ENCODE measurements at regions of chr4 and their contacts with region 1.

Region 1: GRCh38 chr4:38034986-38035882 is 75.0 kb downstream of the PTTG2 start:
- DNase-seq: no peak
- H3K4me3 ChIP-seq: no peak overlapping the region
- H3K27ac ChIP-seq: no peak overlapping the region
- H3K4me1 ChIP-seq: peaks cover 12% of the 10 kb centered on the region
- H3K27me3 ChIP-seq: no peaks in the 10 kb centered on the region
- CTCF ChIP-seq: peak; percentile 78

Region 2: DNA sequence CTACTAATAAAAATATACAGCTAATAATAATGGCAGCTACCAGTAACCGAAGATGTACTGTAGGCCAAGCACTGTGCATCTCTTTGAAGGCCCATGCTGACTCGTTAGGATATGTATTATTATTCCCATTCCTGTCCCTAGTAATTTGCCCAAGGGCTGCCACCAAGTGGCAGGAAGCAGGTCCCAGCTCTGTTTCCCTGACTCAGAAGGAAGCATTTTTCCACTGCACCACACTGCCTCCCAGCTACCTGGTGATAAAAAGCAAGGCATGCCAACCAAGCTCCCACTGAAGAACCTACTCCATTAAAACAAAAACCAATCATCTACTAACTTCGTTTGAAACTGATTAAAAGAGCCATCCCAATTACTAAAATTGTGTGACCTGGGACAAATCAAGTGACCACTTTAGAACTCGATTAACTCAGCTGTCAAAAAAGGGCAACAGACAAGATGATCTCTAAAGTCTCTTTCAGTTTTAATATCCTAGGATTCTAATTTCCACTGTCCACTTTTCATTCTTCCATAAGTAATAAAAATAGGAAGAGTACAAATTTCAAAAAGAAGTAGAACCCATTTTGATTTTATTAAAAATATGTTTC is 233.1 kb before region 1 on chr4:
- intact Hi-C with region 1: loop called (anchors 5 kb)
- DNase-seq: peak; percentile 26
- H3K4me3 ChIP-seq: no peak overlapping the region
- H3K27ac ChIP-seq: no peak overlapping the region
- H3K4me1 ChIP-seq: no peaks in the 10 kb centered on the region
- H3K27me3 ChIP-seq: no peaks in the 10 kb centered on the region
- CTCF ChIP-seq: peak; percentile 71

Region 3: DNA sequence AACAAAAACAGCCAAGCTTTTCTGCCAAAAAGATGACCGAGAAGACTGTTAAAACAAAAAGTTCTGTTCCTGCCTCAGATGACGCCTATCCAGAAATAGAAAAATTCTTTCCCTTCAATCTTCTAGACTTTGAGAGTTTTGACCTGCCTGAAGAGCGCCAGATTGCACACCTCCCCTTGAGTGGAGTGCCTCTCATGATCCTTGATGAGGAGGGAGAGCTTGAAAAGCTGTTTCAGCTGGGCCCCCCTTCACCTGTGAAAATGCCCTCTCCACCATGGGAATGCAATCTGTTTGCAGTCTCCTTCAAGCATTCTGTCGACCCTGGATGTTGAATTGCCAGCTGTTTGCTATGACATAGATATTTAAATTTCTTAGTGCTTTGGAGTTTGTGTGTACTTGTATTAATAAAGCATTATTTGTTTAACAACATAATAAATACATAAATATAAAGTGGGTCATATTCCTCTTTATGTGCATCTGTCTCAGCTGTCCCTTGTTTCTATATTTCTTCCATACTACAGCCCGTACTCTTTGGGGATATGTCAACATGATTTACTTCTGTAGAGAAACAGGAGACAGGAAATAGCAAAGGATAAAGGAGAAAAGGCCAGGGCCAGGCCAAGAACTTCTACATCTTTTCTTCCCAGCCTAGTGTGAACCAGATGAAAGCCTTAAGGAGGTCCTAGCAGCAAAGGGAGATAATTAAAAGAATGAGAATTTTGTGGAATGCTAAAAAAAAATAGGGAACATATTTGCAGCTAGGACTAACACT is 74.4 kb before region 1 on chr4:
- intact Hi-C with region 1: no loop called
- DNase-seq: no peak
- H3K4me3 ChIP-seq: no peak overlapping the region
- H3K27ac ChIP-seq: no peak overlapping the region
- H3K4me1 ChIP-seq: peaks cover 17% of the 10 kb centered on the region
- H3K27me3 ChIP-seq: no peaks in the 10 kb centered on the region
- CTCF ChIP-seq: no peak

Region 4: GRCh38 chr4:37977471-37978247 is 57.6 kb before region 1 on chr4:
- intact Hi-C with region 1: loop called (anchors 10 kb)
- DNase-seq: peak; percentile 75
- H3K4me3 ChIP-seq: peak overlapping the region; percentile 94
- H3K27ac ChIP-seq: peak overlapping the region; percentile 98
- H3K4me1 ChIP-seq: peaks cover 67% of the 10 kb centered on the region
- H3K27me3 ChIP-seq: no peaks in the 10 kb centered on the region
- CTCF ChIP-seq: peak; percentile 84

Region 5: DNA sequence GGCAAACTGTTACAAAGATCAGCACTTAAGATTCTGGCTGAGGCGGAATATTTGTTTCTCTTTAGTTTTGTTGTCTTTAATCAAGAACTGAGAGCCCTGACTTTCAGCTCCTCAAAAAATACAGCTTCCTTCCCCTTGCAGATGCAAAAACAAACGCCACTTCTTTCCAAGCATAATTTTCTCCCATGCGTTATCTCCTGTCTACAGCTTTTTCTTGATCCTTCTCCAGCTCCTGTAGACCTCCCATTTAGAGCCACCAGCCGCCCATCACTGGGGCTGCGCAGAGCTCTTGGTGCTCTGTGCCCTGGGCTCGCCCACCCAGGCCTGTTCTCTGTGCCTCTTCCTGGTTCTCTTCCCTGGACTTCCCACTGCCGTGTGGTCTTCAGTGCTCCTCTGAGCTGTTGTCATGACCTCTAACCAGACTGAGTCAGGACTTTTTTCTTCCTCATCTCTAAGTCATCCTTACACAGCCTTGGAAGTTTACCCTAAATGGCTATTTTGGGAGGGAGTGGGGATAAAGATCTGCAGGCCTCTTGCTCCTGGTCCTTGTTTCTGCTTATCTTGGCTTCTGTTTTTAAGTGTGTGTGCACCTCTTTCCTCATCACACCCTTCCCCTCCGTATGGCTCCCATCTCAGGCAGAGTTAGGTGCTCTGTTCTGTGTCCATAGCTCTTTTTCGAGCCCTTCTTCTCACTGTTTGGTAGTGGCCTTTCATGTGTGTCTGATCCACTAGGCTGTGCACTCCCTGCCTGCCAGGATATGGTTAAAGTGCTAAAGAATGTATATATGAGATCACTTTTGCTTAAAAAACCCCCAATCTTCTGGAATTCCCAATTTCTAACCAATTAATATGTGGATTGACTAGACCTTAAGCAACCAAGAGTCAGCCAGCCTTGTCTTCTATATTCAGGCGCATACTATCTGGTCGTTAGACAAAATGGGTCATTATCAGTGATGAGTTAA is 47.5 kb after region 1 on chr4:
- intact Hi-C with region 1: no loop called
- DNase-seq: no peak
- H3K4me3 ChIP-seq: no peak overlapping the region
- H3K27ac ChIP-seq: peak overlapping the region; percentile 77
- H3K4me1 ChIP-seq: peaks cover 85% of the 10 kb centered on the region
- H3K27me3 ChIP-seq: no peaks in the 10 kb centered on the region
- CTCF ChIP-seq: no peak

Region 6: GRCh38 chr4:38723726-38724474 is 688.7 kb after region 1 on chr4:
- intact Hi-C with region 1: no loop called
- DNase-seq: no peak
- H3K4me3 ChIP-seq: no peak overlapping the region
- H3K27ac ChIP-seq: no peak overlapping the region
- H3K4me1 ChIP-seq: no peaks in the 10 kb centered on the region
- H3K27me3 ChIP-seq: no peaks in the 10 kb centered on the region
- CTCF ChIP-seq: no peak